ENCODE measurements at regions of chr15 and their contacts with region 1.

Region 1: GRCh38 chr15:83207622-83208411 is at the start of gene HDGFL3:
- DNase-seq: no peak
- H3K4me3 ChIP-seq: peak within 1 kb of the TSS; percentile 88 to 96 (median 91)
- H3K27ac ChIP-seq: peak within 1 kb of the TSS; percentile 91 to 96 (median 94)
- H3K4me1 ChIP-seq: peaks cover 16 to 34% (median 34%) of the 10 kb centered on the region in 4 donors
- H3K27me3 ChIP-seq: no peaks in the 10 kb centered on the region
- CTCF ChIP-seq: no peak
- EP300 ChIP-seq: no peak
- POLR2A ChIP-seq: no peak
- total RNA-seq, gene HDGFL3: 38.1 to 72.6 (median 47.9) TPM

Region 2: DNA sequence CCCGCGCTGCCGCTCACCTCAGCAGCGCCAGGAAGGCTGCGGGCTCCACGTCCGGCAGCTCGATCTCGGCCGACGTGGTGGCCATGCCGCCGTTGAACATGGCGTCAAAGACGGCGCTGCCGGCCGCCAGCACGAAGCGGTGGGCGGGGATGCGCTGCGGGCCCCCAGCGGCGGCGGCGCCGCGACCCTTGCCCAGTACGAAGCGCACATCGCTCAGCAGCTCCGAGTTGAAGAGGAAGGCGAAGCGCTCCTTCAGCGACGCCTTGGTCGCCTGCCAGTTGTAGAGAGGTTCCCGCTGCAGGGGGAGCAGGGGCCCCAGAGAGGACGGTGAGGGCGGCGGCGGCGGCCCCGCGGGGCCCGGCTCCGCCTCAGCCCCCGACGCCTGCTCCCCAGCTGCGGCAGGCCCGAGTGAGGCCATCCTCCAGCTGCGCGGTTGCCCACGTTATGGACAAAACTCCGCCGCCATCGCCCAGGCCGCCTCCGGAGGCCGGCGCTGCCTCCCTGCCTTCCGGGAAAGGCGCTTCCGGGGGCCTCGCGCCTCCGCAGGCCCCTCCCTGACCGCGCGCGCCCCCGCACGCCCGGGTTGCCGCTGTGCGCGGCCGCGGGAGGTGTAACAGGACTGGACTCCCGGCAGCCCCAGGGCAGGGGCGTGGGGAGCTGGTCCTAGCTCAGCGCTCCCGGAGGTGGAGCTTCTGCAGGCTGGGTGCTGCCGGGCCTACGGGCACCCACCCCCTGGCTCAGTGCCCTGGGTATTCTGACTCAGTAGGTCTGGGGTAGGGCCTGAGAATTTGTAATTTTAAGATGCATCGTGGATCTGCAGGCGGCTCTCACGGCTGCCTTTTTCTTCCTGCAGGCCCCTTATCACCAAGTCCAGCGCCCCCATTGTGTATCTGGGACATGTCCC is 140.8 kb before region 1 on chr15 and contains the start of gene BTBD1:
- intact Hi-C with region 1: loop called (anchors 5 kb)
- DNase-seq: peak; percentile 96
- H3K4me3 ChIP-seq: peak within 1 kb of the TSS; percentile 75 to 98 (median 79)
- H3K27ac ChIP-seq: peak within 1 kb of the TSS; percentile 90 to 98 (median 93)
- H3K4me1 ChIP-seq: peaks cover 29 to 48% (median 45%) of the 10 kb centered on the region in 4 donors
- H3K27me3 ChIP-seq: no peaks in the 10 kb centered on the region
- CTCF ChIP-seq: peak in 1 of 3 experiments; percentile 14
- EP300 ChIP-seq: no peak
- POLR2A ChIP-seq: peak; percentile 90
- total RNA-seq, gene BTBD1: 53.2 to 69.6 (median 64.2) TPM

Region 3: GRCh38 chr15:83132861-83133523 is 74.8 kb before region 1 on chr15:
- intact Hi-C with region 1: no loop called
- DNase-seq: no peak
- H3K4me3 ChIP-seq: no peak overlapping the region
- H3K27ac ChIP-seq: no peak overlapping the region
- H3K4me1 ChIP-seq: no peaks in the 10 kb centered on the region
- H3K27me3 ChIP-seq: no peaks in the 10 kb centered on the region
- CTCF ChIP-seq: no peak
- EP300 ChIP-seq: no peak
- POLR2A ChIP-seq: no peak

Measured in esophagus muscularis mucosa (tissue), 4 donors.